GM12878 (cell line): ENCODE measurements at regions of chr12 and their contacts with region 1.

Region 1: GRCh38 chr12:102879144-102879763 is 37.8 kb downstream of the PAH start:
- DNase-seq: peak; percentile 51
- ATAC-seq: peak; percentile 88
- H3K4me3 ChIP-seq: no peak overlapping the region
- H3K27ac ChIP-seq: no peak overlapping the region
- H3K4me1 ChIP-seq: no peaks in the 10 kb centered on the region; the same call in 1 of the 2 replicates
- H3K27me3 ChIP-seq: no peaks in the 10 kb centered on the region
- CTCF ChIP-seq: peak; percentile 47 to 79 (median 73); a peak in 5 of 6 replicates
- EP300 ChIP-seq: no peak
- POLR2A ChIP-seq: no peak
- RAD21 ChIP-seq: peak; percentile 71

Region 2: DNA sequence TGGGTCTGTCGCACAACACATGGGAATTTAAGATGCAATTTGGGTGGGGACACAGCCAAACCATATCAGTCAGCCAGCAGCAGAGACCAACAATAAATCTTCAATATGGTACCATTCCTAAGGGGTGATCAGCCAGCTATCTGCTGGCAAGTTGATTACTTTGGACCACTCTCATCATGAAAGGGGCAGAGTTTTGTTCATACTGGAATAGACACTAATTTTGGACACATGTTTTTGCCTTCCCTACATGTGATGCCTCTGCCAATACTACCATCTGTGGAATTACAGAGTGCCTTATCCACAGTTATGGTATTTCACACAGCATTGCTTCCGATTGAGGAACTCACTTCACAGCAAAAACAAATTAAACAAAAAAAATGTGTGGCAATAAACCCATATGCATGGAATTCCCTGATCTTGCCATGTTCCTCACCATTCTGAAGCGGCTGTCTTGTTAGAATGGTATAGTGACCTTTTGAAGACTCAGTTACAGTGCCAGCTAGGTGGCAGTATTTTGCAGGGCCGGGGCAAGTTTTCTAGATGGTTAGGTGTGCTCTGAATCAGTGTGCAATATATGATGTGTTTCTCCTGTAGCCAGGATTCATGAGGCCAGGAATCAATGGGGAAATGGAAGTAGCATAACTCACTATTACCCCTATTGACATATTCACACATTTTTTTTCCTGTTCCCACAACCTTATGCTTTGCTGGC is 219.9 kb before region 1 on chr12:
- CTCF ChIA-PET with region 1: no interaction called
- POLR2A ChIA-PET with region 1: no interaction called
- RAD21 ChIA-PET with region 1: no interaction called
- SMC1A ChIA-PET with region 1: no interaction called
- in situ Hi-C with region 1: no loop called
- intact Hi-C with region 1: no loop called
- DNase-seq: no peak
- ATAC-seq: no peak
- H3K4me3 ChIP-seq: no peak overlapping the region
- H3K27ac ChIP-seq: no peak overlapping the region
- H3K4me1 ChIP-seq: no peaks in the 10 kb centered on the region
- H3K27me3 ChIP-seq: no peaks in the 10 kb centered on the region
- CTCF ChIP-seq: peak in 2 of 3 experiments; percentile 7 to 14; a peak in 1 of 6 replicates
- EP300 ChIP-seq: no peak
- POLR2A ChIP-seq: no peak
- RAD21 ChIP-seq: peak; percentile 18; the same call in 1 of the 2 replicates

Region 3: DNA sequence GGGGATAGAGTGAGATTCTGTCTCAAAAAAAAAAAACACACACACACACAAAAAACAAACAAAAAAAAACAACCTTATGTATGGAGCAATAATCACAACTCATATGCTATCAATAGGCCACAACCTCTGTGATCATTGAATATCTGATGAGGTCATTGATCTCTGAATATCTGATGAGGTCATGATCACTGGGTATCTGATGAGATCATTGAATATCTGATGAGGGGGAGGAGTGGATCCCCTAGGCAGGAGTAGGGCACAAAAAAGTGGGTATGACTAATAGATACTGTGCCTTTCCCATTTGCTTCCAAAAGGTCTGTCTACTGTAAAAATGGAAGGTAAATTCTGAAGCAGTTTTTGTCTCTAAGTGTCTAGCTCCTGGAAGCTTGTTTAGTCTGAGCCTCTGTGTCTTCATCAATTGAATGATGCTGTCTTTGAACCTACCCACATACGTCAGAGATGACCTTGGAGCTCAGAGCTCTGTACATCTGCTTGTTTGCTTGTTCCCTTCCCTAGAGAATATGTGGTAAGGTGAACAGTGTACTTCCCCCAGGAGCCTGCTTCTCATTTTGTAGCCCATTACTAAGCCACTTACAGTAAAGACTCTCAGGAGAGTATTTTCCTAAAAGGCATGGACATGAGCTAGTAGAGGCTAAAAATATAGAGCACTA is 24.2 kb after region 1 on chr12:
- CTCF ChIA-PET with region 1: interaction called, 27 read pairs
- POLR2A ChIA-PET with region 1: interaction called, 4 read pairs
- RAD21 ChIA-PET with region 1: interaction called, 17 read pairs
- SMC1A ChIA-PET with region 1: interaction called, 39 read pairs
- in situ Hi-C with region 1: no loop called
- intact Hi-C with region 1: no loop called
- DNase-seq: no peak
- ATAC-seq: peak; percentile 53
- H3K4me3 ChIP-seq: no peak overlapping the region
- H3K27ac ChIP-seq: no peak overlapping the region
- H3K4me1 ChIP-seq: no peaks in the 10 kb centered on the region
- H3K27me3 ChIP-seq: no peaks in the 10 kb centered on the region
- CTCF ChIP-seq: no peak
- EP300 ChIP-seq: no peak
- POLR2A ChIP-seq: no peak
- RAD21 ChIP-seq: no peak

Region 4: DNA sequence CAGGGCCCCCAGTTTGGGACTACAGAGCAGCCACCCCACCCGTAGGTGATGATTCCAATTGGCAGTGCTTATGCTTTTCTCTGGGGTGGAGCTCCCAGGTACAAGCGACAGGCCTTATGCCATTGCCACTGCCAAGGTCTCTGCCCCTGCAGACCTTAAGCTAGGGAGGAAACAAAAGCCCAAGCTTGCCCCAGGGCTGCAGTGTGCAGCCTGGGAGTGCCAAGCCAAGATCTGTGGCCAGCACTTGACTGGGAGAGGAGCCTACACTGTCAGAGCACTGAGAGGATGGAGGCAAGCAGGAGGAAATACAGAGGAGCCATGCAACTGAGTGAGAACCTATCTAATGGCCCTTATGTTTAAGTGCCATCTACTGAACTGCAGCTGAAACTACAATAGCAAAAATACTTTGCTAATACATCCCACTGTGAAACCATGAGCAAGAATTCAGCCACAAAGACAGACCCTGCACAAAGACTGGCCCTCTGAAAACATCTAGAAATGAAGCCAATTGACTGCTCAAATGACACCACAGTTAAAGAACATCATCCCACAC is 60.5 kb after region 1 on chr12:
- CTCF ChIA-PET with region 1: interaction called, 281 read pairs
- POLR2A ChIA-PET with region 1: interaction called, 3 read pairs
- RAD21 ChIA-PET with region 1: interaction called, 86 read pairs
- SMC1A ChIA-PET with region 1: interaction called, 134 read pairs
- in situ Hi-C with region 1: no loop called
- intact Hi-C with region 1: loop called (anchors 1 kb)
- DNase-seq: no peak
- ATAC-seq: peak; percentile 57
- H3K4me3 ChIP-seq: no peak overlapping the region
- H3K27ac ChIP-seq: no peak overlapping the region
- H3K4me1 ChIP-seq: no peaks in the 10 kb centered on the region
- H3K27me3 ChIP-seq: no peaks in the 10 kb centered on the region
- CTCF ChIP-seq: peak; percentile 21 to 38 (median 37); a peak in 3 of 6 replicates
- EP300 ChIP-seq: no peak
- POLR2A ChIP-seq: no peak
- RAD21 ChIP-seq: peak; percentile 57; the same call in 1 of the 2 replicates

Region 5: GRCh38 chr12:102990419-102990818 is 111.2 kb after region 1 on chr12:
- CTCF ChIA-PET with region 1: interaction called, 18 read pairs
- POLR2A ChIA-PET with region 1: no interaction called
- RAD21 ChIA-PET with region 1: interaction called, 17 read pairs
- SMC1A ChIA-PET with region 1: interaction called, 8 read pairs
- in situ Hi-C with region 1: no loop called
- intact Hi-C with region 1: no loop called
- DNase-seq: no peak
- ATAC-seq: peak; percentile 49
- H3K4me3 ChIP-seq: no peak overlapping the region
- H3K27ac ChIP-seq: no peak overlapping the region
- H3K4me1 ChIP-seq: no peaks in the 10 kb centered on the region; the same call in 1 of the 2 replicates
- H3K27me3 ChIP-seq: no peaks in the 10 kb centered on the region
- CTCF ChIP-seq: 0 out of 6 replicates have a peak, but pooled peaks of 1 of the 3 experiments have one; percentile 14
- EP300 ChIP-seq: no peak
- POLR2A ChIP-seq: no peak
- RAD21 ChIP-seq: peak; percentile 46; the same call in 1 of the 2 replicates

Region 6: DNA sequence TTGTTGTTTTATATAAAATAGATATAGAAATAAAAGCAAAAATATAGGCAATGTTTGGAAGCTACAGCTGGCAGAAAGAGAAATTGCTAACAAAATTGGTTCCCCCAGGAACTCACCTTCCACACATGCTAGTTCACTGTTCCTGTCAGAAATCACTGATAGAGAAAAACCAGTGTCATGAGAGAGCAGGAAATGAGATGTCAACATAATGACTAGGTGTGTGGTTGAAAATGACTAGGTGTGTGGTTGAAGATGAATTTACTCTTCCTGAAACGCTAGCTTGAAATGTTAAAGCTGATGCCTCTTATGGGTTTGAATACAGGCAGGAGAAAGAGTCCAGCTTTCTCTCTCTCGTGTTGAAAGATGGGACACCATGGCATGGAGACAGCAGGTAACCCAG is 400.2 kb after region 1 on chr12:
- CTCF ChIA-PET with region 1: interaction called, 3 read pairs
- POLR2A ChIA-PET with region 1: no interaction called
- RAD21 ChIA-PET with region 1: no interaction called
- SMC1A ChIA-PET with region 1: interaction called, 3 read pairs
- in situ Hi-C with region 1: no loop called
- intact Hi-C with region 1: loop called (anchors 5 kb)
- DNase-seq: peak; percentile 93
- ATAC-seq: peak; percentile 94
- H3K4me3 ChIP-seq: no peak overlapping the region
- H3K27ac ChIP-seq: peak overlapping the region; percentile 53; the same call in 1 of the 2 replicates
- H3K4me1 ChIP-seq: peaks cover 21% of the 10 kb centered on the region
- H3K27me3 ChIP-seq: no peaks in the 10 kb centered on the region
- CTCF ChIP-seq: no peak
- EP300 ChIP-seq: peak; percentile 83 to 93
- POLR2A ChIP-seq: no peak
- RAD21 ChIP-seq: 0 out of 2 replicates have a peak, but pooled peaks have one; percentile 8

Region 7: DNA sequence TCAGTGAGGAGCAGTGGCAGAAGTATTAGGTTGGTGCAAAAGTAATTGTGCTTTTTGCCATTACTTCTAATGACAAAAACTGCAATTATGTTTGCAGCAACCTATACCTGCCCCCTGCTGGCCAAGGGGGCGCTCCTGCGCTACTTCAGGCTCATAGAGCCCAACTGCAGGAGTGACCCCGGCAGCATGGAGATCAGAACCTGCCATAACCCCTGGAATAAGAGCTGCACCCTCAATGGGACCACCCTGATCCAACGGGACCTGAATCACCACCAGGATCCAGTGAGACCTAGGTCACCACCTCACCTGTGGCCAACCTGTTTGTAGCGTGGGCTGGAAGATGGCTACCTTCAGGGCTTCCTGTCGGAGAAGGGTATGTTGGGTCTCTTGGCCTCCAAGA is 624.7 kb after region 1 on chr12:
- CTCF ChIA-PET with region 1: interaction called, 31 read pairs
- POLR2A ChIA-PET with region 1: no interaction called
- RAD21 ChIA-PET with region 1: interaction called, 8 read pairs
- SMC1A ChIA-PET with region 1: interaction called, 24 read pairs
- in situ Hi-C with region 1: no loop called
- intact Hi-C with region 1: no loop called
- DNase-seq: no peak
- ATAC-seq: peak; percentile 26
- H3K4me3 ChIP-seq: no peak overlapping the region
- H3K27ac ChIP-seq: no peak overlapping the region
- H3K4me1 ChIP-seq: peaks cover 22% of the 10 kb centered on the region
- H3K27me3 ChIP-seq: no peaks in the 10 kb centered on the region
- CTCF ChIP-seq: peak; percentile 59 to 80 (median 78)
- EP300 ChIP-seq: no peak
- POLR2A ChIP-seq: no peak
- RAD21 ChIP-seq: peak; percentile 85